OCI-LY7 (cell line): ENCODE measurements at regions of chr3 and their contacts with region 1.

Region 1: DNA sequence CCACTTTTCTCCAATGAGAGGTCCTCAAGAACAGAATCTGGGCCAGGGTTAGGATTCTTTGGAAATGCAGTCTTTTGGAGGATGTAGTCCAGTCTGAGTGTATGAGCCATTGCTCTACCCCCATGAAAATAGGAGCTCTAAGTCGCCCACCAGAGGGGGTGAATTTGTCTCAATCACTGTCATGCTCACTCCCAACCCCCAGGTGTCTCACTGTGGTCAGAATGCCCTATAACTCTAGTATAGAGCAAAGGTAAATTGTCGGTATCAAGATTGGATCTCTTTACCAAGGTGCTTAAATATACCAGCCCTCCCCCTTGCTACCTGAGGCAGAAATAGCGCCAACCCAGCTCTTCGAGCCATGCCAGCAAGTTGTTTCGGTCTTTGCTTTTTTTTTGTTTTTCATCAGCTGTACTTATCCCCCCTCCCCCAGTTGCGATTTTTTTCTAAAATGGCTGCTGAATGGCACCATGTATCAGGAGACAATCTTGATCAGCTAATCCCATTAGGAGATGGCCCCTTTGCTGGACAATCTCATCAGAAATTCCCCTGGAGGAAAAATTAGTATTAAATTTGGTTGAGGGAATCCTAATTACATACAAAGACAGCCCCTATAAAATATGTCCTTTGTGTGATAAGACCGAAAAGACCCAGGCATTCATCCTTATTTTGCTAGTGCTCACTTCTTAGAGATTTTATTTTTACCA is 130.7 kb downstream of the EBLN2 start:
- DNase-seq: peak; percentile 10
- H3K4me3 ChIP-seq: no peak overlapping the region
- H3K27ac ChIP-seq: no peak overlapping the region
- H3K4me1 ChIP-seq: no peaks in the 10 kb centered on the region
- CTCF ChIP-seq: peak; percentile 69

Region 2: GRCh38 chr3:72951259-72951722 is 240.9 kb before region 1 on chr3:
- CTCF ChIA-PET with region 1: no interaction called
- POLR2A ChIA-PET with region 1: no interaction called
- intact Hi-C with region 1: no loop called
- DNase-seq: peak; percentile 10
- H3K4me3 ChIP-seq: no peak overlapping the region
- H3K27ac ChIP-seq: no peak overlapping the region
- H3K4me1 ChIP-seq: peaks cover 18% of the 10 kb centered on the region
- CTCF ChIP-seq: no peak

Region 3: GRCh38 chr3:73070675-73071575 is 121.3 kb before region 1 on chr3:
- CTCF ChIA-PET with region 1: no interaction called
- POLR2A ChIA-PET with region 1: no interaction called
- intact Hi-C with region 1: no loop called
- DNase-seq: no peak
- H3K4me3 ChIP-seq: no peak overlapping the region
- H3K27ac ChIP-seq: no peak overlapping the region
- H3K4me1 ChIP-seq: no peaks in the 10 kb centered on the region
- CTCF ChIP-seq: no peak

Region 4: GRCh38 chr3:73270839-73271483 is 78.8 kb after region 1 on chr3:
- CTCF ChIA-PET with region 1: no interaction called
- POLR2A ChIA-PET with region 1: no interaction called
- intact Hi-C with region 1: no loop called
- DNase-seq: no peak
- H3K4me3 ChIP-seq: no peak overlapping the region
- H3K27ac ChIP-seq: no peak overlapping the region
- H3K4me1 ChIP-seq: no peaks in the 10 kb centered on the region
- CTCF ChIP-seq: no peak

Region 5: DNA sequence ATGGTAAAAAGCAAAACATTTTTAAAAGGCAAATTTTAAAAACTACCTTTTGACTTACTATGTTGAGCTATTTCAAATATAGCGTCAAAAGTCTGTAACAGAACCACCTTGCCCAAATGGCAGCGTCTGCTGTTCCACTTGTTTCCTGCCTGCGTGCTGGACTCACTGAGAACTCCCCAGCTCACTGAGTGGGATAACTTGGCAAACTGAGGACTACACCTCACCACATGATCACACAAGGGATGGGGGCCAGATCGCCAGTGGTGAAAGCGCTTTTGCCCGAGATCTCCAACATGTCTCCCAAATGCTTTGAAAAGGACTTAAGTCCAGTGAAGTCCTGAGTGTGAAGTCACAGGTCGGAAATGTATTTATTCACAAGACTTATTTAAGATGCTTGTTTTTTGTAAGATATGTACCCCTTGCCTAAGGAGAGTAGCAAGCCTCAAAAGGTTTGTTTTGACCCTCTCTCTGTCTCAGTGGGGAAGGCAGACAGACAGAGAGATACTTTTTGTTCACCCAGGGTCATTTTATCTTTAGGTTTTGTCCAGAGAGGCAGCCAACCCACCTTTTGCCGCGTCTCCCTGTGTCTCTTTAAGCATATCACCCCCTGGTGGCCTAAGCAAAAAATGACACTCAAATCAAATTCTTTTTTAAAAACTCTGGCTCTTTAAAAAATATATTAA is 240.0 kb after region 1 on chr3:
- CTCF ChIA-PET with region 1: no interaction called
- POLR2A ChIA-PET with region 1: no interaction called
- intact Hi-C with region 1: loop called (anchors 5 kb)
- DNase-seq: peak; percentile 52
- H3K4me3 ChIP-seq: no peak overlapping the region
- H3K27ac ChIP-seq: no peak overlapping the region
- H3K4me1 ChIP-seq: no peaks in the 10 kb centered on the region
- CTCF ChIP-seq: peak; percentile 90